GM10248 (cell line): ENCODE measurements at regions of chr7 and their contacts with region 1.

Region 1: DNA sequence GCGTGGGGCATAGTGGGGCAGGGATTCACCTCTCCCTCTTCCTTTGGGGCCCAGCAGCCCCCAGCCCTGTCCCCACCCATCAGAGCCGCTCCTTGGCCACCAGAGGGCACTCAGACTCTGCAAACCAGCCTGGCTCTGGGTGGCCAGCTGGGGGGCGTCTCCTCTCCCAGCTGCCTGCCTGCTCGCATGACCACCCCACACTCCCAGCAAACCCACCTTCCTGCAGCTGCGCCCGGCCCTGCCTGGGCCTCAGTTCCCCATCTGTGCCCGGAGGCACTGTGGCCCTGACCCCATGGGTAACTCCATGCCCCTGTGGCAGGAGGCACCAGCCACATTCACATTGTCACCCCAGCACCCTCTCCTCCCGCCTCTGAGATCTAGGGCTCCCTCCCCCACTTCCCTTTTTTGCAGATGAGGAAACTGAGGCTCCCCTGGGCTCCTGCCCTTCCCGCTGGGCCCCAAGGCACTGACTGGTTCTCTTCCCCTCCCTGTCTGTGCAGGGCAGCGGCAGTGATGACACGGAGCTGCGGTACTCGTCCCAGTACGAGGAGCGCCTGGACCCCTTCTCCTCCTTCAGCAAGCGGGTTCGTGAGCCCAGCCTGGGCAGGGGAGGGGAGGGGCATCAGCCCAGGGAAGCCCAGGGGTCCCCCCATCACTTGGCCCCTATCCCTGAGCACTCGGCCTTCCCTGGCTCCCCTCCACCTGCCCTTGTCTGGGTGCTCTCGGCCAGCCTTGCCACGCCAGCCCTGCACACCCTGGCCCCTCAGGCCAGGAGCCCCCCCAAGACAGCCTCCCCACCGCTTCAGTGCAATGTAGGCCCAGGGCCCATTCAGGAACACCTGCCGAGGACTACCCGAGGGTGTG is 6.9 kb upstream of the SH2B2 start:
- DNase-seq: peak; percentile 86
- CTCF ChIP-seq: peak; percentile 95

Region 2: GRCh38 chr7:101542527-101543241 is 737.1 kb before region 1 on chr7:
- CTCF ChIA-PET with region 1: interaction called, 11 read pairs
- POLR2A ChIA-PET with region 1: no interaction called
- DNase-seq: peak; percentile 76
- CTCF ChIP-seq: peak; percentile 82

Region 3: DNA sequence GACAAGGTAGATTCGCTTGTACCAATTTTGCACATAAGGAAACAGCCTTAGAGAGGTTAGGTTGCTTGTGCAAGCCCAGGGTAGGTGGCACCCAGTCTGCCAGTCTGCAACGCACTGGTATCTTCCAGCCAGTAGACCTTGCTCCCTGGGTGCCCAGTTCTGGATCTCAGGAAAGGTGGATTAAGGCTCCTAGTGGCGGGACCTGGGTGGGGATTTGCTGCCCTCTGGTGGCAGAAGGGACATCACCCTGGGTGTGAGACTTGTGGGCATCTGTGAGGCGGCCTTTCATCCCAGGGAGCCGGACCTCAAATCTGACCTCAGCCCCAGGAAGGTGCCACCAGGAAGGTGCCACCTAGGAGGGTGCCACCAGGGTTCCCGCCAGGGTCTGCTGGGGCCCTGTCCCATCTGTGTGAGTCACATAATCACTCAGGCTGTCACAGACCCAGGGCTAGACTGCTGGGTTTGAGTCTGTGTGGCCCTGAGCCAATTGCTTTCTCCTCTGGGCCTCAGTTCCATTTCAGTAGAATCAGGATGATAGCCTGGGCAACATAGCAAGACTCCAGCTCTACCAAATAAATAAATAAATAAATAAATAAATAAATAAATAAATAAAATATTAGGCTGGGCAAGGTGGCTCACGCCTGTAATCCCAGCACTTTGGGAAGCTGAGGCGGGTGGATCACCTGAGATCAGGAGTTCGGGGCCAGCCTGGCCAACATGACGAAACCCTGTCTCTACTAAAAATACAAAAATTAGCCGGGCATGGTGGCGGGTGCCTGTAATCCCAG is 111.1 kb after region 1 on chr7:
- CTCF ChIA-PET with region 1: interaction called, 107 read pairs
- POLR2A ChIA-PET with region 1: no interaction called
- DNase-seq: peak; percentile 74
- CTCF ChIP-seq: peak; percentile 74

Region 4: DNA sequence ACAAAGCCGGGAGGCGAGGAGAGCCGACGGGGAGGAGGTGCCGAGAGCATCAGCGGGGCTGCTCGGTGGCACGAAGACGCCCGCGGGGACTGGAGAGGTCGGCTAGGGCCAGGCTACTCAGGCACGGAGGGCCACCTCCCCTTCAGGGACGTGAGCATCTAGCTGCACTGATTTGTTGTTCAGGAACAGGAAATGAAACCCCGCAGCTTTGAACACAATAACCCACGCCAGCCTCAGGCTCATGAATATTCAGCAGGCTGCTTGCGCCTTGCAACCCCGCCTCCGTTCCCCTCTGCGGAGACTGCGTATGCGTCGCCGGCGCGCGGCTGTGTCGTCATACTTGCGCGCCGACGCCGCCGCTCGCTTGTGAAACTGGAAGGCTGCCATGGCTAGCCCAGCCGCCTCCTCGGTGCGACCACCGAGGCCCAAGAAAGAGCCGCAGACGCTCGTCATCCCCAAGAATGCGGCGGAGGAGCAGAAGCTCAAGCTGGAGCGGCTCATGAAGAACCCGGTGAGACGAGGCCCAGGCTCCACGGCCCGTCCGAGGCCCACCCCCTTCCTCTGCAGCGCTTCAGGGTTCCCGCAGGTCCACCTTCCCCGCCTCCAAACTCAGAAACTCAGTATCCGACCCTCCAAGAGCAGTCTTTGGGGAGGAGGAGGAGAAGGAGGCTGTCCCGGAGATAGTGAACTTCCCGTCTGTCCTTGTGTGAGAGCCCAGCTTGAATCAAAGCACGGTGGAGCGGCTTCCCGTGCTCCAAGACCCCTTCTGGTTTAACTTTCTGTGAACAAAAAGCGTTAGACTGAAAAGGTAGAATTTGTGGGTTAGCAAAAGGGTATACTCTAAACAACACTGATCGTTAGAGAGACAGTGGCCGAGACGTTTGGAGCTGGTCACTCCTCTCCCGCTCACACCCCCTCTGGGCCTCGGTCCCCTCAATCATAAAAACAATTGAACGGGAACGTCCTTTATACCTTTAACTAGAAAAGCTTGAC is 116.6 kb after region 1 on chr7 and contains the start of gene PRKRIP1:
- CTCF ChIA-PET with region 1: interaction called, 107 read pairs
- POLR2A ChIA-PET with region 1: no interaction called
- DNase-seq: peak; percentile 96
- CTCF ChIP-seq: no peak